ENCODE measurements at regions of chr16 and their contacts with region 1.

Region 1: DNA sequence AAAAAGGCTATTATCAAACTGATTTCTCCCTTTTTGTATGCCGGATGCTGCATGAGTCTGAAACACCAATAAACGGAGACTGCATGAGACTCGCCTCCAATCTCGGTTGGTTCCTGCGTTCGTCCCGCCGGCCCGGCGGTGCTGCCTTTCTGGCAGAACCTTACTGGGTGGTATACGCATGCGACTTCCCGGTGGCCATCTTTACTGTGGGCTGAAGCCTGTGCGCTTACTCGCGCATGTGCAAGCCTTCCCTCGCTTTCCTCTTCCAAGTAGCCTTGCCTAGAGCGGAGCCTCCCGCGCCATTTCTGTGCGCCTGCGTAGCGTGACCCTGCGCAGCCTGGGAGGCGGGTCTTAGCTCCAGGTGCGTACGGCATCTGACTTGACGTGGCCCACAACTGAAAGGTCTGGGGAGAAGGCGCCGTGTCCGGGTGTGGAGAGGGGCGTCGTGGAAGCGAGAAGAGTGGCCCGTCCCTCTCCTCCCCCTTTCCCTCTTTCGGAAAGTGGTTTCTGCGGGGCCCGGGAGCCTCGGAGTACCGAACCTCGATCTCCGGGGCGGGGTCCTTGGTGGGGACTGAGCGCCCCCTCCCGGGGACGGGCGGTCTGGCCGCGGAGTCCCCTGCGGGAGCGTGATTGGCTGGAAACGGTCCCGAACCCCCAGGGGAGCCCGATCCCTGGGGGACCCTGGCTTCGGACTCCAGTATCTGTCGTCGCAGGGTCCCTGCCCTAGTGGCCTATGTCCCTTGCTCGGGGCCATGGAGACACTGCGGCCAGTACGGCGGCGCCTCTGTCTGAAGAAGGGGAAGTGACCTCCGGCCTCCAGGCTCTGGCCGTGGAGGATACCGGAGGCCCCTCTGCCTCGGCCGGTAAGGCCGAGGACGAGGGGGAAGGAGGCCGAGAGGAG is at the start of gene PAGR1:
- DNase-seq: peak; percentile 97
- ATAC-seq: peak; percentile 57
- H3K4me3 ChIP-seq: peak within 1 kb of the TSS; percentile 95
- H3K27ac ChIP-seq: peak within 1 kb of the TSS; percentile 70
- H3K4me1 ChIP-seq: peaks cover 44% of the 10 kb centered on the region
- H3K27me3 ChIP-seq: no peaks in the 10 kb centered on the region
- CTCF ChIP-seq: peak; percentile 73
- total RNA-seq, gene PAGR1: 53.8 and 76.7 TPM in 2 replicates

Region 2: GRCh38 chr16:30024451-30024850 is 208.4 kb after region 1 on chr16:
- CTCF ChIA-PET with region 1: no interaction called
- POLR2A ChIA-PET with region 1: no interaction called
- intact Hi-C with region 1: loop called (anchors 5 kb)
- DNase-seq: no peak
- ATAC-seq: no peak
- H3K4me3 ChIP-seq: no peak overlapping the region
- H3K27ac ChIP-seq: no peak overlapping the region
- H3K4me1 ChIP-seq: no peaks in the 10 kb centered on the region
- H3K27me3 ChIP-seq: no peaks in the 10 kb centered on the region
- CTCF ChIP-seq: no peak